GM12878 (cell line): ENCODE measurements at regions of chr9 and their contacts with region 1.

Region 1: GRCh38 chr9:121399883-121400607 is 30.0 kb upstream of the STOM start:
- DNase-seq: peak; percentile 26
- ATAC-seq: peak; percentile 80
- H3K4me3 ChIP-seq: no peak overlapping the region
- H3K27ac ChIP-seq: no peak overlapping the region
- H3K4me1 ChIP-seq: no peaks in the 10 kb centered on the region
- H3K27me3 ChIP-seq: no peaks in the 10 kb centered on the region
- CTCF ChIP-seq: peak; percentile 33 to 68 (median 46); a peak in 5 of 6 replicates
- EP300 ChIP-seq: no peak
- POLR2A ChIP-seq: no peak
- RAD21 ChIP-seq: peak; percentile 79

Region 2: DNA sequence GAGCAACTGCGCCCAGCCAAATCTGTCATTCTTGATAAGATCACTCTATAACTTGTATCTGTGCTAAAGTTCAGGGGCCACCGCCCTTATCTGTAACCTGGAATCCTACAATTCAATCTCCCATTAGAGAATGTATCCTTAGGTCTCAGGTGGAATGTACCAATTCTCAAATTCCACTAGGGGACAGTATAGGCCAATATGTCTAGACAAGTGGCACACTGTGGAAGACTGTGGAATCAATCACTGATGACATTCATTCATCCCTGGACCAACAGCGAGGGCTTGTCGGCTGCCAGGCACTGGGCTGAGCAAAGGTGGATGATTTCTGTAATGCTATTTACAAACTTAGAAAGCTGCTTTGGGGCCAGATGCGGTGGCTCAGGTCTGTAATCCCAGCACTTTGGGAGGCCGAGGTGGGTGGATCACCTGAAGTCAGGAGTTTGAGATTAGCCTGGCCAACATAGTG is 657.1 kb before region 1 on chr9:
- CTCF ChIA-PET with region 1: no interaction called
- POLR2A ChIA-PET with region 1: no interaction called
- RAD21 ChIA-PET with region 1: no interaction called
- SMC1A ChIA-PET with region 1: no interaction called
- in situ Hi-C with region 1: no loop called
- intact Hi-C with region 1: loop called (anchors 10 kb)
- DNase-seq: no peak
- ATAC-seq: peak; percentile 93
- H3K4me3 ChIP-seq: no peak overlapping the region
- H3K27ac ChIP-seq: no peak overlapping the region
- H3K4me1 ChIP-seq: no peaks in the 10 kb centered on the region
- H3K27me3 ChIP-seq: no peaks in the 10 kb centered on the region
- CTCF ChIP-seq: peak; percentile 72 to 84 (median 82)
- EP300 ChIP-seq: no peak
- POLR2A ChIP-seq: no peak
- RAD21 ChIP-seq: peak; percentile 76

Region 3: DNA sequence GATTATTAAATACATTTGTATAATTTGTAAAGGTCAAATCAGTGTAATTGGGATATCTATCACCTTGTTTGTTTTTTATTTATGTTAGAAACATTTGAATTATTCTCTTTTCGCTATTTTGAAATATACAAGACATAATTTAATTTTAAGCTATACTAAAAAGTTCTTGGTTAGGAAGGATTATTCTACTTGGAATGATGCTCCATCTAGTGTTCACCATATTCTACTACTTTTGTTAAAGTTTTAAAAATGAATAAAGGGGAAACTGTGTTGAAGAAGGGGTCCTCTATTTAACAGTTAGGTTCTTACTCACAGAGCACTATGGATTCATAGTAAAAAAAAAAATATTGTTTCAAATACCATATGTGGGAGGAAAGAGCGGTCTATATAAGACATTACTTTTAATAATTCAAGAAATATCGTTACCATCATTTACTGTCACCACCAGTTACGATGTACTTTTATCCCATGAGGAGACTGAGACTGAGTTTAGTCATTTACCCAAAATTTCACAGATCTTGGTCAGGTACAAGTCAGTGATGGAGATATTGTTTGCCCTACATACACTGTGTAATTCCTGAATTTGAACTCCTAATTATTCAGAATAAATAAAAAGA is 23.7 kb before region 1 on chr9:
- CTCF ChIA-PET with region 1: interaction called, 75 read pairs
- POLR2A ChIA-PET with region 1: no interaction called
- RAD21 ChIA-PET with region 1: interaction called, 3 read pairs
- SMC1A ChIA-PET with region 1: interaction called, 7 read pairs
- in situ Hi-C with region 1: no loop called
- intact Hi-C with region 1: no loop called
- DNase-seq: no peak
- ATAC-seq: no peak
- H3K4me3 ChIP-seq: no peak overlapping the region
- H3K27ac ChIP-seq: no peak overlapping the region
- H3K4me1 ChIP-seq: no peaks in the 10 kb centered on the region
- H3K27me3 ChIP-seq: no peaks in the 10 kb centered on the region; a peak in 1 of 4 replicates
- CTCF ChIP-seq: peak in 1 of 3 experiments; percentile 9; a peak in 2 of 6 replicates
- EP300 ChIP-seq: no peak
- POLR2A ChIP-seq: no peak
- RAD21 ChIP-seq: peak; percentile 37; the same call in 1 of the 2 replicates

Region 4: GRCh38 chr9:121386442-121387185 is 13.4 kb before region 1 on chr9:
- CTCF ChIA-PET with region 1: interaction called, 75 read pairs
- POLR2A ChIA-PET with region 1: no interaction called
- RAD21 ChIA-PET with region 1: interaction called, 6 read pairs
- SMC1A ChIA-PET with region 1: interaction called, 19 read pairs
- in situ Hi-C with region 1: no loop called
- intact Hi-C with region 1: no loop called
- DNase-seq: no peak
- ATAC-seq: no peak
- H3K4me3 ChIP-seq: no peak overlapping the region
- H3K27ac ChIP-seq: no peak overlapping the region
- H3K4me1 ChIP-seq: no peaks in the 10 kb centered on the region
- H3K27me3 ChIP-seq: no peaks in the 10 kb centered on the region
- CTCF ChIP-seq: no peak
- EP300 ChIP-seq: no peak
- POLR2A ChIP-seq: no peak
- RAD21 ChIP-seq: no peak